ENCODE measurements at regions of chr1 and their contacts with region 1.

Region 1: DNA sequence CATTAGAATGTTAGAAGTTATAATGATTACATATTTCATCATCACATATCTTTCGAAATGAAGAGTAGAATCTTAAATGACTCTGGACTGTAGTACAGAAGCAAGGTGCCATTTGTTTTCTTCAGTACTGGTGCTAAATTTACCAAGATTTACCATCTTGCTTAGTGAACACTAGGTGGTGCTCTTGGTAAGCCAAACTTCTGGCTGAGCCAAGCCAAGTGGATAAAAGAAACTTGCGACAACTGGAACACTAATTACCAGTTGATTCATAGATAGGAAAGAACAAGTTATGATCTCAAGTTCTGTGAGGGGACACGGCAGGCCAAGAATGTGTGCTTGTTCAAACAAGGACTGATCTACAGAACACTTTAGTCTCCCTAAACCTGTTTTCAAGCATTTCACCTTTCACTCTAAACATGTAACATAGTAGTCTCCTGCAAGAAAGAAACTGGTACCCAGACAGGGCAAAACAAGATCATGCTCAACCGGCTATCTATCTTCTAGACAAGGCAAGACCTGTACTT is 19.8 kb downstream of the SPRTN start:
- DNase-seq: peak; percentile 82
- H3K4me3 ChIP-seq: no peak overlapping the region
- H3K27ac ChIP-seq: no peak overlapping the region
- H3K4me1 ChIP-seq: peaks cover 7% of the 10 kb centered on the region
- H3K27me3 ChIP-seq: no peaks in the 10 kb centered on the region
- CTCF ChIP-seq: peak; percentile 54
- POLR2A ChIP-seq: no peak

Region 2: GRCh38 chr1:230957580-230957989 is 400.3 kb before region 1 on chr1:
- CTCF ChIA-PET with region 1: no interaction called
- POLR2A ChIA-PET with region 1: no interaction called
- dilution Hi-C with region 1: no loop called
- intact Hi-C with region 1: no loop called
- DNase-seq: no peak
- H3K4me3 ChIP-seq: no peak overlapping the region
- H3K27ac ChIP-seq: no peak overlapping the region
- H3K4me1 ChIP-seq: no peaks in the 10 kb centered on the region
- H3K27me3 ChIP-seq: no peaks in the 10 kb centered on the region
- CTCF ChIP-seq: no peak
- POLR2A ChIP-seq: no peak

Region 3: GRCh38 chr1:231315887-231316286 is 42.0 kb before region 1 on chr1:
- CTCF ChIA-PET with region 1: interaction called, 5 read pairs
- POLR2A ChIA-PET with region 1: no interaction called
- dilution Hi-C with region 1: no loop called
- intact Hi-C with region 1: loop called (anchors 1 kb)
- DNase-seq: peak; percentile 59
- H3K4me3 ChIP-seq: no peak overlapping the region
- H3K27ac ChIP-seq: no peak overlapping the region
- H3K4me1 ChIP-seq: no peaks in the 10 kb centered on the region
- H3K27me3 ChIP-seq: no peaks in the 10 kb centered on the region
- CTCF ChIP-seq: peak; percentile 70 to 83
- POLR2A ChIP-seq: no peak

Region 4: DNA sequence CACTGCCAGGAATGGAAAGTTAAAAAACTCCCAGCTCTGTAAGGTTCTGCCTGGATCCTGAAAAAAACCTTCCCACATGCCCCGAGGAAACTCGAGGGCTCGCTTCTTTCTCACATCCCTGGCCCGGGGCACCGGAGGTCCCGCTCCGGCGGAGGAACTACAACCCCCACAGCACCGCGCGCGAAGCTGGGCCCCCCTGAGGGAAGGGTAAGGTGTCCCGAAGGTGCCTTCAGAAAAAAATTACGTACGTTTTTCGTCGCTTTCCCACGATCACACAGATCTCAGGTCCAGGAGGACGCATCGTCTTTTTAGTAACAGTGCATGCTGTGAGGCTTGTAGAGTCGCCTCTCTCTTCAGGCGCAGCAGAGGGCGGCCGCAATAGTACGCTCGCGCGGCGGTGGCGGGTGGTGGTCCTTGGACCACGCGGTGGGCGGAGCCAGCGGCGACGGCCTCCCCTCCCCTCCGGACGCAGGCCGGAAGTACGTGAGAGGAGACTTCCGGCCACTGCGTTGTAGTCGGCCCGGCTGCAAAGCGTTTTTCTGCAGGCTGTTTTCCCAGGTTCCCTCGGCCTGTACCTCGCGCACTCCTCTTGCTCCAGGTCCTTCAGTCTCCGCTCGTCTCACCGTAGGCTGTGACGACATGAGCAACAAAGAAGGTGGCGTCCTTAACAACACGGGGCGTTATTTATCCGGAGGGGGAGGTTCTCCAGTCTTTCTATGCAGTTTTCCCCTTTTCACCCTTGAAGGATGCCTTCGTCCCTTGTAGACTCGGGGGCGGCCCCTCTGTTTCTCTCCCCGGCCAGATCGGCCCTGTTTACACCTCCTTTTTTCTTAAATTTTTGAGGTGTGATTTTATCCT is 170.5 kb after region 1 on chr1 and contains the start of gene TSNAX:
- CTCF ChIA-PET with region 1: interaction called, 3 read pairs
- POLR2A ChIA-PET with region 1: no interaction called
- dilution Hi-C with region 1: no loop called
- intact Hi-C with region 1: loop called (anchors 1 kb)
- DNase-seq: peak; percentile 97
- H3K4me3 ChIP-seq: peak within 1 kb of the TSS; percentile 35 to 75 (median 45)
- H3K27ac ChIP-seq: peak within 1 kb of the TSS; percentile 86
- H3K4me1 ChIP-seq: peaks cover 15% of the 10 kb centered on the region
- H3K27me3 ChIP-seq: no peaks in the 10 kb centered on the region
- CTCF ChIP-seq: no peak
- POLR2A ChIP-seq: peak; percentile 94
- total RNA-seq, gene TSNAX: 26.3 and 26.4 TPM in 2 replicates

Region 5: GRCh38 chr1:231584124-231584523 is 226.2 kb after region 1 on chr1:
- CTCF ChIA-PET with region 1: interaction called, 47 read pairs
- POLR2A ChIA-PET with region 1: no interaction called
- dilution Hi-C with region 1: no loop called
- intact Hi-C with region 1: loop called (anchors 1 kb)
- DNase-seq: peak; percentile 88
- H3K4me3 ChIP-seq: no peak overlapping the region
- H3K27ac ChIP-seq: peak overlapping the region; percentile 47
- H3K4me1 ChIP-seq: peaks cover 8% of the 10 kb centered on the region
- H3K27me3 ChIP-seq: no peaks in the 10 kb centered on the region
- CTCF ChIP-seq: peak in 1 of 2 donors; percentile 20
- POLR2A ChIP-seq: no peak

Region 6: GRCh38 chr1:231806623-231807495 is 449.0 kb after region 1 on chr1:
- CTCF ChIA-PET with region 1: no interaction called
- POLR2A ChIA-PET with region 1: no interaction called
- dilution Hi-C with region 1: no loop called
- intact Hi-C with region 1: loop called (anchors 2 kb)
- DNase-seq: peak; percentile 50
- H3K4me3 ChIP-seq: no peak overlapping the region
- H3K27ac ChIP-seq: no peak overlapping the region
- H3K4me1 ChIP-seq: peaks cover 9% of the 10 kb centered on the region
- H3K27me3 ChIP-seq: no peaks in the 10 kb centered on the region
- CTCF ChIP-seq: peak; percentile 74 to 86
- POLR2A ChIP-seq: no peak

Region 7: DNA sequence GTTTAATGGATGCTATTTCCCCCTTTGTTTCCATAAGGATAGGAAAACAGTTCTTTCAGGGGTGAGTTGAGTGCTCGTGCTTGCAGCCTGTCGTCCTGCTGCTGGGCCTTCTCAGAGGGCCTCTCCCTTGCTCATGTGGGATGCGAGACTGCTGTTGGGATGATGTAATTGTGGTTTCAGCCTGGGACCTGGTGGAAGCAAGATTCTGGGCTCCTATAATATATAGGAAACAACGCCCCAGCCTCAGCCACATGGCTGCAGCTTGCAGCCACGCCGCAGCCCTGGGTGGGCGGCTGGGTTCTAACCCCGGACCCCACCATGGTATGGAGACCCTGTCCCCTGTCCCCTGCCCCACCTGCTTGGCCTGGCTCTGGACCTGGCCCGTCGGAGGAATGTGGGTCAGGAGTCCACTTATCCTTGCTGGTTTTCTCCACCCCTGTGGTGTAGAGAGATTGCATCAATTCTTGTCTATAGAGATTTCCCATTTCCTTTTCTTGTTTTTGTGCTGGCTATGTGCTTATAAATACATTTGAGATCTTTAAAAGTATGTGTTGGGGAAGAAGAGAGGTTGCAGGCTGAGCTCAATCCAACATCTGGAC is 914.2 kb after region 1 on chr1:
- CTCF ChIA-PET with region 1: no interaction called
- POLR2A ChIA-PET with region 1: no interaction called
- dilution Hi-C with region 1: no loop called
- intact Hi-C with region 1: no loop called
- DNase-seq: no peak
- H3K4me3 ChIP-seq: no peak overlapping the region
- H3K27ac ChIP-seq: no peak overlapping the region
- H3K4me1 ChIP-seq: no peaks in the 10 kb centered on the region
- H3K27me3 ChIP-seq: no peaks in the 10 kb centered on the region
- CTCF ChIP-seq: no peak
- POLR2A ChIP-seq: no peak